ENCODE measurements at regions of chr3 and their contacts with region 1.

Region 1: GRCh38 chr3:137110484-137110883 is 152.7 kb downstream of the IL20RB start:
- DNase-seq: peak in 1 of 3 donors; percentile 9
- ATAC-seq: peak; percentile 39
- H3K4me3 ChIP-seq: no peak overlapping the region
- H3K4me1 ChIP-seq: no peaks in the 10 kb centered on the region
- CTCF ChIP-seq: peak; percentile 33

Region 2: GRCh38 chr3:136535906-136536305 is 574.6 kb before region 1 on chr3:
- intact Hi-C with region 1: no loop called
- DNase-seq: no peak
- ATAC-seq: no peak
- H3K4me3 ChIP-seq: no peak overlapping the region
- H3K4me1 ChIP-seq: no peaks in the 10 kb centered on the region
- CTCF ChIP-seq: no peak

Region 3: GRCh38 chr3:137970914-137971831 is 860.7 kb after region 1 on chr3:
- intact Hi-C with region 1: loop called in 1 of 2 experiments (anchors 10 kb)
- DNase-seq: peak; percentile 72 to 89 (median 84)
- ATAC-seq: peak; percentile 99
- H3K4me3 ChIP-seq: no peak overlapping the region
- H3K4me1 ChIP-seq: no peaks in the 10 kb centered on the region
- CTCF ChIP-seq: peak; percentile 73